AG04449 (cell line): ENCODE measurements at regions of chr15 and their contacts with region 1.

Region 1: GRCh38 chr15:40108855-40109735 is at the start of gene BMF:
- DNase-seq: peak; percentile 91
- H3K4me3 ChIP-seq: peak within 1 kb of the TSS; percentile 81
- CTCF ChIP-seq: peak; percentile 31

Region 2: DNA sequence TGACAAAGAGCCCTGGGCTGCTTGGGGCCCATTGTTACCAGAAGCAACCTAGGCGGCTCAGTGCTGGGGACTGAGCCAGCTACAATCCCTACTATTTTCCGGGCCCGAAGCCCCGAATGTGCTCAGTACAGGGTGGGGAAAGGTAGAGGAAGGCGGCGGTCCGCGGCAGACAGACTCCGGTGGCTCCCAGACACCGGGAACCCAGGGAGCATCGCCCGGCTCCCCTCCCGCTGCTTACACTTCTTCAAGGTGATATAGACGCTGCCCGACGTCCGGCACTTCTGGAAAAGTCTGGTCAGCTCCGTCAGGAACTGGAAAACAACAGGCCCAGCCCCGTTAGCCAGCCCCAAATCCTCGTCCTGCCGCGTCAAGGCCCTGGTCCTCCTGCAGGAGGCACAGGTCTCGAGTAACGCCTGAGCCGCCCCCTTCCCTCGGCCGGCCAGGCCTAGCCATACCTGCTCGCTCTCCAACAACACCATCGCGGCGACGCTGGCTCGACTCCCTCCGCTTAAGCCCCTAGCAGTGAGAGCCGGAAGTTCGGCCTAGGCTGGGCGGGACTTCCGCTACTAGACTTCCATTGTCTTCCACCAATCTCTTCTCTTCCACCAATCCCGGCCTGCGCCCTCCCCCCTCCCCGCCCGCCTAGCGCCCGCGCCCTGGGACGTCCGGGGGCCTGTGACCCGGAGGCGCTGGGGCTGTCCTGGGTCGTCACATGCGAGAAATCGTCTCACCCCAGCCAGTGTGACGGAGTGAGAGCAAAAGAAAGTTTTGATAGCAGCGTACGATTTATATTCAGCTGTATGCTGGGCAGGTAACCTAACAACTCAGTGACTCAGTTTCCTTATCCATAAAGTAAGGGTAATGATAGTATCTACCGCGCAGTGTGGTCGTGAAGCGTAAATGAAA is 70.2 kb before region 1 on chr15 and contains the start of gene SRP14:
- CTCF ChIA-PET with region 1: interaction called, 30 read pairs
- POLR2A ChIA-PET with region 1: no interaction called
- DNase-seq: no peak
- H3K4me3 ChIP-seq: peak within 1 kb of the TSS; percentile 95
- CTCF ChIP-seq: no peak

Region 3: GRCh38 chr15:40054605-40055545 is 54.2 kb before region 1 on chr15:
- CTCF ChIA-PET with region 1: interaction called, 109 read pairs
- POLR2A ChIA-PET with region 1: no interaction called
- DNase-seq: no peak
- H3K4me3 ChIP-seq: no peak overlapping the region
- CTCF ChIP-seq: no peak

Region 4: GRCh38 chr15:40075298-40076044 is 33.6 kb before region 1 on chr15:
- CTCF ChIA-PET with region 1: interaction called, 20 read pairs
- POLR2A ChIA-PET with region 1: no interaction called
- DNase-seq: no peak
- H3K4me3 ChIP-seq: no peak overlapping the region
- CTCF ChIP-seq: no peak

Region 5: DNA sequence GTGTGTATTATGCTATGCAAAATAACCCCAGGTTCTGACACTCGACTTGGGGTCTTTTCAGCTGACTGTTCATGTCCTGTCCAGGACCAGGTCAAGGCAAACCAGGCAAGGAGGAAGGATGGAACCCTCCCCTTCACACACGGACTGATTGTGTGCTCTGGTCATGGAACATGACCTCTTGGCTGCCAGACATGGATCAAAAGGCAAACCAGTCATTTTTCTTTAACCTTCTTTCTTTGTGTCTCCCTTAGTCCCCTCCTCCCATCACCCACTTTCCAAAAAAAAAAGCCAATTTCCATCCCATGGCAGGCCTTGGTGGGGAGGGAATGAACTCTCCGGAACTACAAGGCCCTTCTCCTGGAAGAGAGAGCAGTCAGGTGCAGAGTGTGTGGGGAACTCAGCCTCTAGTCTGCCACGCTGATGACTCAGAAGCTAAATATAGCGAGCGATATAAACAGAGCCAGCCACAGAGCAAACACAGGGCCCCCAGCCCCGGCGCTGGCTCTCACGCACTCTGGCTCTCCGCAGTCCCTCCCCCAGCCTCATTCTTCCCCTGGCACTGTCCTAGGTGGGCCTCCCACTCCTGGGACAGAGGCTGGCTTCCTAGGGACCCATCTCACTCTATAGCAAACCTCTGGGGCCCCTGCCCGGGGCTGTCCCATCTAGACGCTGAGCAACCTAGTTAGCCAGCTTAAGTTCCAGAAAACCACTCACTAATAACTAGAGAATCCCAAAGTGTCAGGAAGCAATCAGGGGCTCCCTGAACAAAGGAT is 10.4 kb before region 1 on chr15:
- CTCF ChIA-PET with region 1: interaction called, 270 read pairs
- POLR2A ChIA-PET with region 1: interaction called, 5 read pairs
- DNase-seq: peak; percentile 80
- H3K4me3 ChIP-seq: no peak overlapping the region
- CTCF ChIP-seq: no peak

Region 6: GRCh38 chr15:40150163-40150925 is 41.2 kb after region 1 on chr15:
- CTCF ChIA-PET with region 1: interaction called, 10 read pairs
- POLR2A ChIA-PET with region 1: no interaction called
- DNase-seq: no peak
- H3K4me3 ChIP-seq: no peak overlapping the region
- CTCF ChIP-seq: no peak